A549 (cell line): ENCODE measurements at regions of chr15 and their contacts with region 1.

Region 1: GRCh38 chr15:60237421-60237820 is 160.4 kb downstream of the ANXA2 start:
- DNase-seq: no peak
- ATAC-seq: no peak
- H3K4me3 ChIP-seq: no peak overlapping the region
- H3K27ac ChIP-seq: no peak overlapping the region
- H3K4me1 ChIP-seq: no peaks in the 10 kb centered on the region
- CTCF ChIP-seq: no peak
- EP300 ChIP-seq: no peak
- POLR2A ChIP-seq: no peak
- RAD21 ChIP-seq: no peak

Region 2: GRCh38 chr15:60340207-60340921 is 102.9 kb after region 1 on chr15:
- CTCF ChIA-PET with region 1: no interaction called
- POLR2A ChIA-PET with region 1: interaction called, 10 read pairs
- DNase-seq: no peak
- ATAC-seq: peak; percentile 17 to 30; a peak in 5 of 6 replicates
- H3K4me3 ChIP-seq: no peak overlapping the region
- H3K27ac ChIP-seq: peak overlapping the region; percentile 10 to 56; a peak in 4 of 6 replicates
- H3K4me1 ChIP-seq: peaks cover 47% of the 10 kb centered on the region
- CTCF ChIP-seq: peak; percentile 23; the same call in 1 of the 3 replicates
- EP300 ChIP-seq: no peak
- POLR2A ChIP-seq: no peak
- RAD21 ChIP-seq: peak in 1 of 2 experiments; percentile 38; a peak in 2 of 5 replicates